Activated CD8-positive, alpha-beta T cell treated with anti-CD3 and anti-CD28 coated beads for 36 hours (primary cell): ENCODE measurements at regions of chr17 and their contacts with region 1.

Region 1: GRCh38 chr17:68435876-68436842 is 21.1 kb downstream of the WIPI1 start:
- DNase-seq: peak; percentile 93
- ATAC-seq: peak; percentile 81
- H3K4me3 Mint-ChIP-seq: no peak overlapping the region
- H3K27ac Mint-ChIP-seq: peak overlapping the region; percentile 83
- H3K4me1 Mint-ChIP-seq: peaks cover 34% of the 10 kb centered on the region
- H3K27me3 Mint-ChIP-seq: no peaks in the 10 kb centered on the region
- CTCF ChIP-seq: peak; percentile 85

Region 2: DNA sequence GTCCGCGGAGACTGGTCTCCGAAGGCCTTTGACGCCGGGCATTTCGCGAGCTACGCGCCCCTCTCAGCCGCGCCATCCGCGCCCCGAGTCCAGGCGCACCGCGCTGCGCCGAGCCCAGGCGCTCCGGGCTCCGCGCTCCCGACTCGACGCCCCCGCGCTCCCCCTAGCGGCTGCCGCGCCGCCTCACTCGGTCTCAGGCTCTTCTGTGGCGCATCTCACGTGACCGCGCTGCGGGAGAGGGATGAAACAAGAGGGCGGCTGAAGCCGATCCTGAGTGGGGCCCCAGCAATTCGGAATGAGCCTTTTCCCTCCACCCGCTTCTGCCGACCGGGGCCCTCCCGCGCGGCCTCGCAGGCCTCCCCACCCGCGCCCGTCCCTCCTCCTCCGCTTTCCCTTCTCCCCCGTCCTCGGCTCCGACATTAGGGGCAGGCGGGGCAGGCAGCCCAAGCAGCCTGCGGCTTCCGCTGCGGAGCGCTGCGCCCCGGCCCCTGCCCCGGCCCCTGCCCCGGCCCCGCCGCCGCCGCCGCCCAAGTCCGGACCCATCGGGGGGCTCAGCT is 230.8 kb before region 1 on chr17:
- CTCF ChIA-PET with region 1: interaction called, 12 read pairs
- POLR2A ChIA-PET with region 1: no interaction called
- intact Hi-C with region 1: no loop called
- DNase-seq: peak; percentile 95
- ATAC-seq: peak; percentile 78
- H3K4me3 Mint-ChIP-seq: peak overlapping the region; percentile 87
- H3K27ac Mint-ChIP-seq: peak overlapping the region; percentile 88
- H3K4me1 Mint-ChIP-seq: peaks cover 24% of the 10 kb centered on the region
- H3K27me3 Mint-ChIP-seq: peaks cover 7% of the 10 kb centered on the region
- CTCF ChIP-seq: peak; percentile 88

Region 3: DNA sequence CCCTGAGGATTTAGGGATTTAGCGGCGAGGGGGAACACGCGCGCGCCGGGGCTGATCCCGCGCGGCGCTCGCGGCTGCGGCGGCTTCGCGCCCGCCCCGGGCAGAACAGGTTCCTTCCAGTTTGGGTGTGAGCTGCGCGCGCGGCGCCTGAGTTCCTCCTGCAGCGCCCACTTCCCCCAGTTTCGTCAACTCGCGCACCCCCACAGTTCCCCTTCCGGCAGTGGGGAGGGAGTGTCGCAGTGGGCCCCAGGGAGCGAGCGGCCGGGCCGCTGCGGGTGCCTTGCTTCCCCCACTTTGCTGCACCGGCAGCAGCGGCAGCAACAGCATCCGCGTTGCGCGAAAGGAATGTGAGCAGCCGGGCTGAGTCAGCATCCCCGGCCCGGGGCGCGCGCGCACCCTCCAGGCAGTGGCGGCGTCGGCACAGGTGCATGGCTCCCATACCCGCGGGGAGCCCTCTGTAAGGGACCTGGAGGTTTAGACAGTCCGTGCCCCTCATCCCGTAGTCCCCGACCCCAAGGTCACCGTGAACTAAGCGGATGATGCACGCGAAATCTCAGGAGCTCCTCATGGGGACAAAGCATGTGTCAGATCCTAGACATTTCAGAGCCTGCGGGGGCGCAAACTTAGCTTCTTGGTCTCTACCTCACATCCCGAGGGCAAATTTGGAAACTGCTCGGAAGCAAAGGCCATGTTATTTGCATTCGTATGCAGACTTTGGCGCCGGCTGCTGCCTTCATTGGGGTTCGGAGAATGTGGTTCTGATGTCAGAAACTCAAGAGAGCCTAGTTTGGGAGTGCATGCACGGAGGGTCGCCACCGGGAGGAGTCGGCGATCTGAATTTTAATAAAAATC is 144.1 kb before region 1 on chr17:
- CTCF ChIA-PET with region 1: interaction called, 23 read pairs
- POLR2A ChIA-PET with region 1: interaction called, 23 read pairs
- intact Hi-C with region 1: loop called (anchors 10 kb)
- DNase-seq: peak; percentile 93
- ATAC-seq: peak; percentile 69
- H3K4me3 Mint-ChIP-seq: peak overlapping the region; percentile 94
- H3K27ac Mint-ChIP-seq: peak overlapping the region; percentile 93
- H3K4me1 Mint-ChIP-seq: peaks cover 65% of the 10 kb centered on the region
- H3K27me3 Mint-ChIP-seq: no peaks in the 10 kb centered on the region
- CTCF ChIP-seq: no peak

Region 4: GRCh38 chr17:68356520-68356919 is 79.6 kb before region 1 on chr17:
- CTCF ChIA-PET with region 1: interaction called, 17 read pairs
- POLR2A ChIA-PET with region 1: no interaction called
- intact Hi-C with region 1: no loop called
- DNase-seq: peak; percentile 81
- ATAC-seq: peak; percentile 92
- H3K4me3 Mint-ChIP-seq: peak overlapping the region; percentile 51
- H3K27ac Mint-ChIP-seq: peak overlapping the region; percentile 76
- H3K4me1 Mint-ChIP-seq: peaks cover 45% of the 10 kb centered on the region
- H3K27me3 Mint-ChIP-seq: no peaks in the 10 kb centered on the region
- CTCF ChIP-seq: no peak

Region 5: GRCh38 chr17:68420065-68420464 is 16.1 kb before region 1 on chr17:
- CTCF ChIA-PET with region 1: interaction called, 32 read pairs
- POLR2A ChIA-PET with region 1: interaction called, 7 read pairs
- intact Hi-C with region 1: no loop called
- DNase-seq: no peak
- ATAC-seq: no peak
- H3K4me3 Mint-ChIP-seq: no peak overlapping the region
- H3K27ac Mint-ChIP-seq: no peak overlapping the region
- H3K4me1 Mint-ChIP-seq: peaks cover 12% of the 10 kb centered on the region
- H3K27me3 Mint-ChIP-seq: no peaks in the 10 kb centered on the region
- CTCF ChIP-seq: no peak

Region 6: GRCh38 chr17:68457539-68458259 is 21.5 kb after region 1 on chr17:
- CTCF ChIA-PET with region 1: interaction called, 166 read pairs
- POLR2A ChIA-PET with region 1: interaction called, 6 read pairs
- intact Hi-C with region 1: loop called (anchors 2 kb)
- DNase-seq: peak; percentile 98
- ATAC-seq: peak; percentile 93
- H3K4me3 Mint-ChIP-seq: peak overlapping the region; percentile 83
- H3K27ac Mint-ChIP-seq: peak overlapping the region; percentile 30
- H3K4me1 Mint-ChIP-seq: peaks cover 57% of the 10 kb centered on the region
- H3K27me3 Mint-ChIP-seq: no peaks in the 10 kb centered on the region
- CTCF ChIP-seq: no peak